ENCODE measurements at regions of chr5 and their contacts with region 1.

Region 1: GRCh38 chr5:11903614-11904269 is 504 bp downstream of the CTNND2 start:
- DNase-seq: peak; percentile 76
- H3K4me3 Mint-ChIP-seq: peak overlapping the region; percentile 53
- H3K27ac Mint-ChIP-seq: no peak overlapping the region
- H3K4me1 Mint-ChIP-seq: peaks cover 9% of the 10 kb centered on the region
- H3K27me3 Mint-ChIP-seq: peaks cover 13% of the 10 kb centered on the region
- CTCF ChIP-seq: peak; percentile 57

Region 2: GRCh38 chr5:11268891-11269290 is 634.9 kb before region 1 on chr5:
- CTCF ChIA-PET with region 1: no interaction called
- intact Hi-C with region 1: loop called (anchors 10 kb)
- DNase-seq: no peak
- H3K4me3 Mint-ChIP-seq: no peak overlapping the region
- H3K27ac Mint-ChIP-seq: no peak overlapping the region
- H3K4me1 Mint-ChIP-seq: no peaks in the 10 kb centered on the region
- H3K27me3 Mint-ChIP-seq: no peaks in the 10 kb centered on the region
- CTCF ChIP-seq: no peak

Region 3: DNA sequence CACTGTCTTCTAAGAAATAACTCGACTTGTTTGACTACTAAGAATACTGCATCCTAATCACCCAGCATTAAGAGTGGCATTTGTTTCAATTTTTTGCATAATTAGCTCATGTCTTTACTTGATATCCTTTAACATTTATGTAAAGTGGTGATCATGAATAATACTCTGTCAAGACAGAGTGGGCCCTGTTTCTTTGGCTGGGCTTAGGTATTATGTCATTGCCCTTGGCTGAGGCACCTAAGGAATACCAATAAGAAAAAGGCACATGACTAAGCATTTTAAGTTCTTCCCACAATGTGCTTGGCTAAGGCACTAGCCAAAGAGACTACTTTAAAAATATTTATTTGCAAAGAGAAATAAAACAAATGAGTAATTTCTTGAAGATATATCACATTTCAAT is 307.6 kb before region 1 on chr5:
- CTCF ChIA-PET with region 1: no interaction called
- intact Hi-C with region 1: loop called (anchors 10 kb)
- DNase-seq: peak; percentile 14
- H3K4me3 Mint-ChIP-seq: peak overlapping the region; percentile 62
- H3K27ac Mint-ChIP-seq: peak overlapping the region; percentile 95
- H3K4me1 Mint-ChIP-seq: peaks cover 61% of the 10 kb centered on the region
- H3K27me3 Mint-ChIP-seq: no peaks in the 10 kb centered on the region
- CTCF ChIP-seq: no peak

Region 4: GRCh38 chr5:11725907-11726306 is 177.8 kb before region 1 on chr5:
- CTCF ChIA-PET with region 1: no interaction called
- intact Hi-C with region 1: loop called (anchors 2 kb)
- DNase-seq: no peak
- H3K4me3 Mint-ChIP-seq: no peak overlapping the region
- H3K27ac Mint-ChIP-seq: no peak overlapping the region
- H3K4me1 Mint-ChIP-seq: peaks cover 24% of the 10 kb centered on the region
- H3K27me3 Mint-ChIP-seq: no peaks in the 10 kb centered on the region
- CTCF ChIP-seq: no peak

Region 5: GRCh38 chr5:11797132-11797531 is 106.6 kb before region 1 on chr5:
- CTCF ChIA-PET with region 1: no interaction called
- intact Hi-C with region 1: loop called (anchors 10 kb)
- DNase-seq: peak; percentile 55
- H3K4me3 Mint-ChIP-seq: no peak overlapping the region
- H3K27ac Mint-ChIP-seq: no peak overlapping the region
- H3K4me1 Mint-ChIP-seq: peaks cover 14% of the 10 kb centered on the region
- H3K27me3 Mint-ChIP-seq: no peaks in the 10 kb centered on the region
- CTCF ChIP-seq: no peak

Region 6: DNA sequence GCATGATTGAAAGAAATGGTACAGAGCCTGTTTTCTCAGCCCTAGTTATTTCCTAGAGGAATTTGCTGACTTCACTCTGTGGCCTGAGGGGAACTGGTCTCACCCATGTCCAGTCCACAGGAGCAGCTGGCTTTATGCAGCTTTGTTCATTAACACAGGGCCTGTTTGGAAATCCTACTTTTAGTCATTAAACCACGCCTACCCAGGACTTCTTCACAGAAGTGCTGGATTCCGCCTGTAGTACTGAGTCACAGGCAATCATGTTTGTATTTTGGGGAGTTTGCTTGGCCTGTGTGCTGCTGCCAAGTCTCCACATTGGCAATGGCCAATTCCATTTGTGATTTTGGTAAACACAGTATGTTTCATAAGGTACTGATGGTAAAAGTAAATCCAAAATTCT is 52.3 kb before region 1 on chr5:
- CTCF ChIA-PET with region 1: no interaction called
- intact Hi-C with region 1: loop called (anchors 2 kb)
- DNase-seq: peak; percentile 39
- H3K4me3 Mint-ChIP-seq: no peak overlapping the region
- H3K27ac Mint-ChIP-seq: no peak overlapping the region
- H3K4me1 Mint-ChIP-seq: peaks cover 5% of the 10 kb centered on the region
- H3K27me3 Mint-ChIP-seq: no peaks in the 10 kb centered on the region
- CTCF ChIP-seq: no peak

Region 7: DNA sequence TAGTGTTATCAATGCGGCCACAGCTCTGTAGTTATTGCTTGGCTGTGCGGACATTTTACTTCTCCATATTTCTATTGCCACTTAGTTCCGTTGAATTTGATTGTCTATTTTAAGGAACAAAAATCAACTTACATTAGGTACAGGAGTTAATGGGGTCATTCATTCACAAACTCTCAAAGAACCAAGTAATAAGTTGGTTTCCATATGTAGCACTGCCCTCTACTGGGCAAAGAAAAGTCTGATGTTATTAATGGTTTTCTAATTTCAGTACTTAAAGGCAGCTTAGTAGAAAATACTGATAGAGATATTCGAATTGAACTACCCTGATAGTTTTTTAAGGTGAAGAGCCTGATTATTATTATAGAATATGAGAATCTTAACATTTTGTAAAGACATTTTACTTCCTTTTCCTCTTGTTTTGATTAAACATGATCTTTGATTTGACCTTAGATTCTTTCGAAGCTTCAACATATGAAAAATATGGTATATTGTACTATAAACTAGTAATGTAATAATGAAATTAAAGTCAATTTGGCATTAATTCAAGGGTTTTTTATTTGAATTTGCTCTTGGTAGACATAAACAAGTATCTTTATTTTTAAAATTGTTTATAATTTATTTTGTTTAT is 120.0 kb after region 1 on chr5:
- CTCF ChIA-PET with region 1: no interaction called
- intact Hi-C with region 1: loop called (anchors 2 kb)
- DNase-seq: peak; percentile 46
- H3K4me3 Mint-ChIP-seq: no peak overlapping the region
- H3K27ac Mint-ChIP-seq: no peak overlapping the region
- H3K4me1 Mint-ChIP-seq: no peaks in the 10 kb centered on the region
- H3K27me3 Mint-ChIP-seq: no peaks in the 10 kb centered on the region
- CTCF ChIP-seq: peak; percentile 51